ENCODE measurements at regions of chr2 and their contacts with region 1.

Region 1: GRCh38 chr2:17518212-17519154 is at the start of gene RAD51AP2:
- DNase-seq: peak; percentile 82 to 85
- ATAC-seq: peak; percentile 95 to 96
- H3K4me3 ChIP-seq: peak within 1 kb of the TSS; percentile 53 to 60 (median 57)
- H3K27ac ChIP-seq: peak within 1 kb of the TSS; percentile 80 to 85 (median 84)
- H3K4me1 ChIP-seq: peaks cover 0 to 4% of the 10 kb centered on the region in 2 donors
- H3K27me3 ChIP-seq: no peaks in the 10 kb centered on the region
- CTCF ChIP-seq: no peak
- POLR2A ChIP-seq: peak; percentile 28 to 58
- total RNA-seq, gene RAD51AP2: not detected

Region 2: GRCh38 chr2:17538844-17539554 is 20.5 kb after region 1 on chr2:
- in situ Hi-C with region 1: no loop called
- intact Hi-C with region 1: loop called (anchors 1 kb)
- DNase-seq: peak in 1 of 2 donors; percentile 54
- ATAC-seq: peak; percentile 62 to 78
- H3K4me3 ChIP-seq: peak overlapping the region; percentile 44 to 69 (median 56)
- H3K27ac ChIP-seq: peak overlapping the region; percentile 8 to 74 (median 69)
- H3K4me1 ChIP-seq: peaks cover 6 to 23% of the 10 kb centered on the region in 2 donors
- H3K27me3 ChIP-seq: peaks cover 0 to 28% (median 4%) of the 10 kb centered on the region in 3 donors
- CTCF ChIP-seq: no peak
- POLR2A ChIP-seq: no peak

Measured in gastrocnemius medialis (tissue), 4 donors.